ENCODE measurements at regions of chr3 and their contacts with region 1.

Region 1: GRCh38 chr3:18389108-18389733 is 35.9 kb downstream of the SATB1 start:
- DNase-seq: peak in 6 of 14 experiments; percentile 8 to 73 (median 50)
- ATAC-seq: peak; percentile 62
- H3K4me3 ChIP-seq: no peak overlapping the region
- H3K4me3 Mint-ChIP-seq: no peak overlapping the region
- H3K27ac ChIP-seq: no peak overlapping the region
- H3K27ac Mint-ChIP-seq: peak overlapping the region; percentile 68
- H3K4me1 ChIP-seq: peaks cover 4% of the 10 kb centered on the region
- H3K4me1 Mint-ChIP-seq: peaks cover 93% of the 10 kb centered on the region
- H3K27me3 ChIP-seq: no peaks in the 10 kb centered on the region
- H3K27me3 Mint-ChIP-seq: no peaks in the 10 kb centered on the region
- CTCF ChIP-seq: peak; percentile 93

Region 2: DNA sequence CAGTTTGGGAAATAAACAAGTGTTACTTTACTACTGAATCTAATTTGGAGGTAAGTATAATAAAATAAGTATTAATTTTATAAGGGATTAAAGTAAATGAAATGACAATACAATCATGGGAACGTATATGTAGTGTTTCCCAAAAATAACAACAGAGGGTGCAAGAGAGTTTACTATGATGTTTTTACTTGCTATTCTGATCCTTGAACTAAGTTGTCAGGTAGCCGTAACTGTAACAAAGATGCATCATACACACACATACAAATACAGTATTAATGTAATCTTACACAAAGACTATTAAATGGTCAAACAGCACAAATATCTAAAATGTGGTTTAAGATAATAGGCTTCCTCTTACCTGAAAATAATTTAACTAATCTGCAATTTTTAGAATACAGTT is 958.2 kb before region 1 on chr3:
- CTCF ChIA-PET with region 1: no interaction called
- POLR2A ChIA-PET with region 1: no interaction called
- intact Hi-C with region 1: loop called in 1 of 2 experiments (anchors 5 kb)
- DNase-seq: peak in 2 of 14 experiments; percentile 11 to 12
- ATAC-seq: no peak
- H3K4me3 ChIP-seq: no peak overlapping the region
- H3K4me3 Mint-ChIP-seq: no peak overlapping the region
- H3K27ac ChIP-seq: no peak overlapping the region
- H3K27ac Mint-ChIP-seq: no peak overlapping the region
- H3K4me1 ChIP-seq: no peaks in the 10 kb centered on the region
- H3K4me1 Mint-ChIP-seq: no peaks in the 10 kb centered on the region
- H3K27me3 ChIP-seq: no peaks in the 10 kb centered on the region
- H3K27me3 Mint-ChIP-seq: no peaks in the 10 kb centered on the region
- CTCF ChIP-seq: peak; percentile 21

Region 3: GRCh38 chr3:18354701-18355100 is 34.5 kb before region 1 on chr3:
- CTCF ChIA-PET with region 1: interaction called, 6 read pairs
- POLR2A ChIA-PET with region 1: no interaction called
- intact Hi-C with region 1: loop called in 1 of 2 experiments (anchors 5 kb)
- DNase-seq: no peak
- ATAC-seq: no peak
- H3K4me3 ChIP-seq: no peak overlapping the region
- H3K4me3 Mint-ChIP-seq: no peak overlapping the region
- H3K27ac ChIP-seq: no peak overlapping the region
- H3K27ac Mint-ChIP-seq: peak overlapping the region; percentile 69
- H3K4me1 ChIP-seq: no peaks in the 10 kb centered on the region
- H3K4me1 Mint-ChIP-seq: peaks cover 65% of the 10 kb centered on the region
- H3K27me3 ChIP-seq: no peaks in the 10 kb centered on the region
- H3K27me3 Mint-ChIP-seq: no peaks in the 10 kb centered on the region
- CTCF ChIP-seq: no peak

Region 4: DNA sequence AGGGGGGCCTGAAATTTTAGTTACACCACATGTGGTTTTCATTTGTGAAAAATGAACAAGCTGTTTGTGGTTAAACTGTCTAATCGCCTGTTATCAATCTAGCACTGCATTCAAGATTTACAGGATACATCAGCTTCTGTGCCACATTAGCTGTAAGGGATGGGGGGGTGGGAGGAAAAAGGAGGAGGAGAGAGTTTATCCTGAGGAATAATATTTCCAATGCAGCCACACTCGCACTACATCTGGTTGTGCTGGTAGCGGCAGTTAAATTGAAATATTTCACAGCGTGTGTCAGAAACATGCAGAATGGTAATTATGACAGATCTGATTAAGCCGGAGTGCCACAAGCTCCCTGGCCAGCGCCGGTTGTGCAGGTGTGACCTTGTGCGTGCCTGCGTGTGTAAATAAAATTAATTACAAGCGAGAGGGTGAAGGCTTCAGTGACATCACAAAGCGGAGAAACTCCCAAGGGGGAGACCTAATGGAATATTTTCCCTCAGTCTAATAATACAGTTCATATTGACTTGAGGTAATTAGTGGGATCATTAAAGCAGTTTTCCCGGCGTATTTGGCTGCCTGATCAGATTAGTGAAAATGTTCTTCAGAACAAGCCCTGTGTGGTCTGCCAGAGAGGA is 19.6 kb before region 1 on chr3:
- CTCF ChIA-PET with region 1: interaction called, 15 read pairs
- POLR2A ChIA-PET with region 1: interaction called, 8 read pairs
- intact Hi-C with region 1: loop called in 1 of 2 experiments (anchors 2 kb)
- DNase-seq: no peak
- ATAC-seq: no peak
- H3K4me3 ChIP-seq: no peak overlapping the region
- H3K4me3 Mint-ChIP-seq: peak overlapping the region; percentile 63
- H3K27ac ChIP-seq: no peak overlapping the region
- H3K27ac Mint-ChIP-seq: peak overlapping the region; percentile 93
- H3K4me1 ChIP-seq: peaks cover 15% of the 10 kb centered on the region
- H3K4me1 Mint-ChIP-seq: peaks cover 96% of the 10 kb centered on the region
- H3K27me3 ChIP-seq: no peaks in the 10 kb centered on the region
- H3K27me3 Mint-ChIP-seq: no peaks in the 10 kb centered on the region
- CTCF ChIP-seq: no peak

Region 5: GRCh38 chr3:18401300-18401961 is 12.2 kb after region 1 on chr3:
- CTCF ChIA-PET with region 1: interaction called, 15 read pairs
- POLR2A ChIA-PET with region 1: interaction called, 10 read pairs
- intact Hi-C with region 1: loop called in 1 of 2 experiments (anchors 2 kb)
- DNase-seq: no peak
- ATAC-seq: peak; percentile 45
- H3K4me3 ChIP-seq: peak overlapping the region; percentile 2
- H3K4me3 Mint-ChIP-seq: peak overlapping the region; percentile 81
- H3K27ac ChIP-seq: peak overlapping the region; percentile 8 to 31
- H3K27ac Mint-ChIP-seq: peak overlapping the region; percentile 82
- H3K4me1 ChIP-seq: peaks cover 9% of the 10 kb centered on the region
- H3K4me1 Mint-ChIP-seq: peaks cover 100% of the 10 kb centered on the region
- H3K27me3 ChIP-seq: no peaks in the 10 kb centered on the region
- H3K27me3 Mint-ChIP-seq: no peaks in the 10 kb centered on the region
- CTCF ChIP-seq: no peak

Region 6: DNA sequence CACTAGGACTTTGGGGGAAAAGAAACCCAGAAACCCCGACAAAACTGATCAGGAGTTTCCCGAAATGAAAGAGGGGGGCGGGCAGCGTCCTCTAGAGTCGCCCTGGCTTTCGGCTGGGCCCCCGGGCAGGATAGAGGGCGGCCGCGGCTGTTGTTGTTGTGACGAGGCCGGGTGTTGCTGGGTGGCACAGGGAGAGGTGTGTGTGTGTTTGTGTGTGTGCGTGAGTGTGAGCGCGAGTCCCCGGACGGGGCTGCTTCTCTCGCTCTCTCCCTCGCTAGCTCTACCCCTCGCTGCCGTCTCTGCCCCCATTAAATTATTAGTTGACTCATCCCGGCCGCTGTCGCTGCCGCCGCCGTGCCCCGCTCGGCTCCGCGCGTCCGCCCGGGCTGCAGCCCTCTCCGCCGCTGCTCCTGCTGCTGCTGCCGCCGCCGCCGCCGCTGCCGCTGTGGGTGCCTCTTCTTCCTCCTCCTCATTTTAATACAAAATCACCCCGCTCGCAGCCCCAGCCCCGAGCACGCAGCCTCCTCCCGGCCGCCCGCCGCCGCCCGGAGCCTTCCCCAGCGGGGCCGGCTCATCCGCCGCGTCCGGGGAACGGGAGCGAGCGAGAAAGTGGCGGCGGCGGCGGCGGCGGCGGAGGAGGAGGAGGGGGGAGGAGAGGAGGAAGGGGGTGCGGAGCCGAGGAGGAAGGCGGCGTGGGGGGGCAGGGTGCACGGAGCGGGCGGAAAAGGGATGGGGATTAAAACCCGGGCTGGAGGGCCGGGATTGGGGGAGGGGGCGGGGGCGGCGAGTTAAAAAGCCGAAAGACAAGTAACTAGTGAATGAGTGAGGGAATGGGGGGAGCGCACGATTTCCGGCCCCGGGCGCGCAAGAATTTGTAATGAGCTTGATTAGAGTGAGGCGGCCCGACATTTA is 35.8 kb after region 1 on chr3 and contains the start of gene SATB1:
- CTCF ChIA-PET with region 1: no interaction called
- POLR2A ChIA-PET with region 1: interaction called, 6 read pairs
- intact Hi-C with region 1: loop called in 1 of 2 experiments (anchors 5 kb)
- DNase-seq: peak; percentile 50 to 82 (median 67)
- ATAC-seq: peak; percentile 33
- H3K4me3 ChIP-seq: peak within 1 kb of the TSS; percentile 90
- H3K4me3 Mint-ChIP-seq: peak within 1 kb of the TSS; percentile 98
- H3K27ac ChIP-seq: peak within 1 kb of the TSS; percentile 74 to 94
- H3K27ac Mint-ChIP-seq: peak within 1 kb of the TSS; percentile 96
- H3K4me1 ChIP-seq: peaks cover 29% of the 10 kb centered on the region
- H3K4me1 Mint-ChIP-seq: peaks cover 81% of the 10 kb centered on the region
- H3K27me3 ChIP-seq: no peaks in the 10 kb centered on the region
- H3K27me3 Mint-ChIP-seq: no peaks in the 10 kb centered on the region
- CTCF ChIP-seq: no peak
- total RNA-seq, gene SATB1: 390 to 393 TPM

Region 7: GRCh38 chr3:18531662-18532236 is 142.5 kb after region 1 on chr3:
- CTCF ChIA-PET with region 1: no interaction called
- POLR2A ChIA-PET with region 1: no interaction called
- intact Hi-C with region 1: no loop called
- DNase-seq: no peak
- ATAC-seq: no peak
- H3K4me3 ChIP-seq: no peak overlapping the region
- H3K4me3 Mint-ChIP-seq: no peak overlapping the region
- H3K27ac ChIP-seq: no peak overlapping the region
- H3K27ac Mint-ChIP-seq: no peak overlapping the region
- H3K4me1 ChIP-seq: no peaks in the 10 kb centered on the region
- H3K4me1 Mint-ChIP-seq: no peaks in the 10 kb centered on the region
- H3K27me3 ChIP-seq: no peaks in the 10 kb centered on the region
- H3K27me3 Mint-ChIP-seq: no peaks in the 10 kb centered on the region
- CTCF ChIP-seq: no peak

Region 8: GRCh38 chr3:18758047-18758704 is 369.0 kb after region 1 on chr3:
- CTCF ChIA-PET with region 1: interaction called, 7 read pairs
- POLR2A ChIA-PET with region 1: no interaction called
- intact Hi-C with region 1: loop called in 1 of 2 experiments (anchors 5 kb)
- DNase-seq: peak in 7 of 14 experiments; percentile 3 to 90 (median 47)
- ATAC-seq: peak; percentile 97
- H3K4me3 ChIP-seq: no peak overlapping the region
- H3K4me3 Mint-ChIP-seq: peak overlapping the region; percentile 5
- H3K27ac ChIP-seq: no peak overlapping the region
- H3K27ac Mint-ChIP-seq: peak overlapping the region; percentile 21
- H3K4me1 ChIP-seq: no peaks in the 10 kb centered on the region
- H3K4me1 Mint-ChIP-seq: peaks cover 56% of the 10 kb centered on the region
- H3K27me3 ChIP-seq: no peaks in the 10 kb centered on the region
- H3K27me3 Mint-ChIP-seq: no peaks in the 10 kb centered on the region
- CTCF ChIP-seq: peak; percentile 83

Measured in CD4-positive, alpha-beta T cell (primary cell).